Aorta (tissue), 5 donors: ENCODE measurements at regions of chrX and their contacts with region 1.

Region 1: GRCh38 chrX:133335027-133335426 is 80.3 kb downstream of the GPC4 start:
- DNase-seq: no peak
- ATAC-seq: no peak
- H3K4me3 ChIP-seq: no peak overlapping the region
- H3K27ac ChIP-seq: no peak overlapping the region
- H3K4me1 ChIP-seq: peaks cover 1 to 2% of the 10 kb centered on the region in 2 donors
- H3K27me3 ChIP-seq: no peaks in the 10 kb centered on the region

Region 2: DNA sequence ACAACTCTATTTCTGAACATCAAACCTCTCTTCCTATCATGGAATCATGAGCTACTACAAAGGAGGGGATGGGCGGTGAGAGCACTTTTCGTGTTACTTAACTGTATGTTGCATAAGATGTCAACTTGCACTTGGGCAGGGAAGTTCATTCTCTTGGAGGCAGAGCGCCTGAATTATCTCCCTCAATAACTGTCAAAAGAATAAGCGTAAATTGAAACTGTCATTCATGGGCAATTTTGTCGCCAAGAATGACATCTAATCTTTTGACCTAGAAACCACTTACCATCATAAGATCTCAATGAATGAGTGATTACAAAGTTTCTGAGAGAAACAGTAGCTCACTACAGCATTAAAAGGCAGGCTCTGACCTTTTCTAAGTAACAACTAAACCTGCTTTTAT is 214.6 kb before region 1 on chrX:
- intact Hi-C with region 1: no loop called
- DNase-seq: no peak
- ATAC-seq: no peak
- H3K4me3 ChIP-seq: no peak overlapping the region
- H3K27ac ChIP-seq: no peak overlapping the region
- H3K4me1 ChIP-seq: no peaks in the 10 kb centered on the region
- H3K27me3 ChIP-seq: no peaks in the 10 kb centered on the region

Region 3: DNA sequence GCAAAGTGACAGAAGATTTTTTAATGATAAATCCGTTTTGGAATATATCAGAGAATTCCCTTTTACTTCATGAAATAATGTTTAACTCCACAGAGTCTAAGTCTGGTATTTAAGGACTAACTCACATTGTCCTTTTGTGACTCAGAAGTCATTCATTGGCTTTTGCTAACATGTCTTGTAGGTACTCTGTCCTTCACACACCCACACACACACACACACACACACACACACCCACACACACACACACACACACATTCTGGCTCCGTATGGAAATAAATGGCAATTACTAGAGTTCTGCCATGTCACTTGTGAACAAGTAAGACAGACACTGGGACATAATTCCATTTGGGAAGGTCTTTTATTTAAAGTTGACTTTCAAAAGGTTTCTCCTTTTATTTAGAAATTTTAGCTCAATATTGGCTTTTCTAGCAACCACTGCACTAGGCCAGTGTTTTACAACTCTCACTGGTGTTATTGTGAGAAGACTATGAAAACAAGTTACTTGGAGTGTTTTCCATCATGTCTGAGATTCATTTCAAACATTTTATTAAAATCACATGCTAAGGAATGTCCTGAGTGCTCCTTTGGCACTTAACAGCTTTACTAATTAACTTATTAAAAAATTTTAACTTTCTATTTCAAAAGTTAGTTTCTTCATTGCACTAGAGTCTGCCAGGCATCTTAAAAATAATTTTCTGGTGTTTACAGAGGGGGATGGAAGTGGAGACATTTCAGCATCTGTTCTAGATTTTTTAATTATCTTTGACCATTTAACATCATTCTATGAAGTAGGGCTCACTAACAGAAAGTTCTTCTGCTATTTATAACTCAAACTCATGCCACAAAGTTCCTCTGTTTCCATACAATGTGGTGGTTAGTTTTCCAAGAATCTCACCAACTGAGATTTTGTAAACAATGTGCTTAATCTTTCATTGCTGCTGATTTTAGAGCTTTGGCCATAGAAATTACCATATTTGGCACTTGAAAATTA is 320.5 kb after region 1 on chrX:
- intact Hi-C with region 1: loop called in 1 of 2 experiments (anchors 10 kb)
- DNase-seq: no peak
- ATAC-seq: no peak
- H3K4me3 ChIP-seq: no peak overlapping the region
- H3K27ac ChIP-seq: no peak overlapping the region
- H3K4me1 ChIP-seq: no peaks in the 10 kb centered on the region
- H3K27me3 ChIP-seq: no peaks in the 10 kb centered on the region